ENCODE measurements at regions of chr15 and their contacts with region 1.

Region 1: GRCh38 chr15:58517682-58518525 is 86.1 kb downstream of the LIPC start:
- DNase-seq: no peak
- H3K4me3 Mint-ChIP-seq: peak overlapping the region; percentile 18
- H3K27ac Mint-ChIP-seq: peak overlapping the region; percentile 84
- H3K4me1 Mint-ChIP-seq: peaks cover 54% of the 10 kb centered on the region
- H3K27me3 Mint-ChIP-seq: no peaks in the 10 kb centered on the region

Region 2: DNA sequence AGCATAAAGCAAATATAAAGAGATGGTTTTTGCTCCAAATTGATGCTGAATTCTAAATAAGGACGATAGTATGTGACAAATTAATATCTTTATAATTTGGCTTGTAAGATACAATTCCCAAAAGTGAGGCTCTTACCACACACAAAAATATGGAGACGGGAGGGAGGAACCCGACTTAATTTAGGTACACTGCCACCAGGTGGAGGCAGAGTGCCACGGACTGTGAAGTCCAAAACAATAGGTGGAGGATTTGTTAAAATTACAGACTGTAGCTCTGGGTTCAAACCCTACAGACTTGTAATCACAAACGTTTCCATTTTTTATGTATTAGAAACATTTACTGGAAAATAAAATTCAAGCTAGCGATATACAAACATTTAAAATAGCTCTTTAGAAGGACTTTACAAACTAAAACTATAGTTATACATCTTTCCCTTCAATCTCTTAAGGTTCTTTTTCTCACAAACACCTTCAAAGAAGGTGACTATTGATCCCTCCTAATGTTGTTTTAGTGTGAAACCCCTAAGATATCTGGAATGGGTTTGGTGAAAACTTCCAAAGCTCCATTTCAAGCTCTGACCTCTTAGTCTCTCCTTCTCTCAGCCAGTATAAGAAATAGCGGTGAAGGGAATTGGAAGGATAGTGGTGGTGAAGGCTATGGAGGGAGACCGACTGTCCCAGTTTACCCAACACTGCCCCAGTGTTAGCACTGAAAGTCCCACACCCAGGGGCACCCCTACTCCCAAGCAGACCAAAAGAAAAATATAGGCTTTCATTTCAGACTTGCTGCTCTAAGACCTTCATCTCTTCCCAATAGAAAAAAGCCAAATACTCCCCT is 290.0 kb before region 1 on chr15:
- intact Hi-C with region 1: loop called (anchors 5 kb)
- DNase-seq: peak; percentile 47
- H3K4me3 Mint-ChIP-seq: no peak overlapping the region
- H3K27ac Mint-ChIP-seq: no peak overlapping the region
- H3K4me1 Mint-ChIP-seq: peaks cover 8% of the 10 kb centered on the region
- H3K27me3 Mint-ChIP-seq: peaks cover 19% of the 10 kb centered on the region

Region 3: DNA sequence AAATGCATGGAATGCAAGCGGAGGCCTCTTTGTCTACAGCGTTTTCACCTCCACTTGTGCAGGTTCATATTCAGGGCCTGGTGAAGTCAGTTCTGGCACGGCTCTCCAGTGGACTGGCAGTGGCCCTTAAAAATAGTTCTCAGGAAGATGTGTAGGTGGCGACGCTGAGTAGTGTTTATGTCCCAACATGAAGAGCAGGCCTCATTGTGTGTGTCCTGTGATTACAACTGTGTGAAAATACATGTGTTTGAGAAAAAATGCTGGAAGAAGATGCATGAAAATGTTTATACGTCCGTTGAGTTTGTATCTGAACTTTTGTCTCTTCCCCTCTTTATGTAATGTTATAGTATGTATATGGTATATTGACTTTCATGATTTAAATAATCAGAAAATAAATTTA is 78.9 kb before region 1 on chr15:
- intact Hi-C with region 1: loop called (anchors 1 kb)
- DNase-seq: peak; percentile 30
- H3K4me3 Mint-ChIP-seq: no peak overlapping the region
- H3K27ac Mint-ChIP-seq: no peak overlapping the region
- H3K4me1 Mint-ChIP-seq: peaks cover 33% of the 10 kb centered on the region
- H3K27me3 Mint-ChIP-seq: no peaks in the 10 kb centered on the region

Region 4: DNA sequence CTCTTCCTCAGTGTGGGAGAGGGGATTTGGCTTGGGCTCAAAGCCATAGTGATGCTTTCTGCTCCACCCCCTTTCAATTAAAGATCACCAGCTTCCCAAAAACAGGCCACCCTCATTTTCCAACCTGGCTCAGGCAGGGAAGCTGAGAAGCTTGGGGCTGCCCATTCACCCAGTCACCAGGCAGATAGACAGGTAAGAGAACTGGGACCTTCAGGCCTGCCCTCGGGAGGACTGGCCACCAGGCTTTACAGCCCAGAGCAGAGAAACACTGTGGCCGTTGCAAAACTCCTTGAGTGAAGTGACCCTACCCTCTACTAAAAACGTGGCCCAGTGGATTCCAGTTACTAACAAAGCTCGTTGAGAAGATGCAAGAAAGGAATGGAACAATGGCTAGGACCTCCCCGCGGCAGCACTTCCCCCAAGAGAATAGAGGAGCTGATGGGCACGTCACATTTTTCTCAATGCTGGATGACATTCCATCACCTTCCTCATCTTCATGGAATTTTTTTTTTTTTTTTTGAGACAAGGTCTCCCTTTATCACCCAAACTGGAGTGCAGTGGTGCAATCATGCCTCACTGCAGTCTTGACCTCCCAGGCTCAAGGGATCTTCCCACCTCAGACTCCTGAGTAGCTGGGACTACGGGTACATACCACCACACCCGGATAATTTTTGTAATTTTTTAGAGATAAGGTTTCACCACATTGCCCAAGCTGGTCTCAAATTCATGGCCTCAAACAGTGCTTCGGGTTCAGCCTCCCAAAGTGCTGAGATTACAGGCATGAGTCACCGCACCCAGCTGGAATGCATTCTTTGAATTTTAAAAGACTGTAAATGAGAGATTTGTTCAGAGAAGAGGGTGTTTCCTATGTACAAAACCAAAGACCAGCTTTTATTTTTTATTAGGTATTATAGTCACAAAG is 48.2 kb before region 1 on chr15:
- intact Hi-C with region 1: loop called (anchors 5 kb)
- DNase-seq: no peak
- H3K4me3 Mint-ChIP-seq: no peak overlapping the region
- H3K27ac Mint-ChIP-seq: no peak overlapping the region
- H3K4me1 Mint-ChIP-seq: peaks cover 48% of the 10 kb centered on the region
- H3K27me3 Mint-ChIP-seq: no peaks in the 10 kb centered on the region

Region 5: DNA sequence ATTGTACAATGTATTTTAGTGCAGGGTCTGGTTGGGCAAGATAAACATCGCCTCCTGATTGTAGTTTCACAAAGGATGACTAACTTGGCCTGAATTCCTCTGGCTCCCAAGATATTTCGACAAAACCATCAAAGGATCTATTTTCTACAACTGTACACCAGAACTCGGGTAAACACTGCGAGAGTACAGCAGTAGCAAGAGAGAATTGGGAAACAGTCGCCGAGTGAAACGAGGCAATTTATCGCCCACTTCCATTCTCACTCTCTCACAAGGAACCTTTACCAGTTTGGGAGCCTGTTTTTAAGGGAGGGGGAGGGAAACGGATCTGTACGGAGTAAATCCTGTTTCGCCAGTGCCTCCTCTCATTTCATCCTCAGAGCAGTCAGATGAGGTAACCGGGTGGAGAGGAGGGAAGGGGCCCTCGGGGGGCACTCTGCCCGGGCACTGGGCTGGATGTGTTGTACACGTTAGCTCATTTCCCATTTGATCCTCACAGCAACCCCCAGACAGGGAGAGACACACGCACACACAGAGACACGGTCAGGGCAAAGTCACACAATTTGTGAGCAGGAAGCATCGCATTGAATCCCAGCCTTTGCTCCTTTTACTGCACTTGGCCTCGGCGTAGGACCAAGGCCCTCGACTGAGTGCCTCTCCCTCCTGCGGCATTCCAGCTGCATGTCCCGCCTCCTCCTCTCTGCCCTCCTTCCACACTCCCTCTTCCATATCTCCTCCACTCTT is 34.0 kb after region 1 on chr15:
- intact Hi-C with region 1: loop called (anchors 1 kb)
- DNase-seq: no peak
- H3K4me3 Mint-ChIP-seq: no peak overlapping the region
- H3K27ac Mint-ChIP-seq: peak overlapping the region; percentile 91
- H3K4me1 Mint-ChIP-seq: peaks cover 39% of the 10 kb centered on the region
- H3K27me3 Mint-ChIP-seq: no peaks in the 10 kb centered on the region

Measured in activated T-helper 2 cell treated with anti-CD3 and anti-CD28 coated beads, Interferon-gamma antibody, Interleukin-2, Interleukin-4, amounts not matched to agents 10 μg/mL and 5 μg/mL and 100 μg/mL, durations not matched to agents 14 hours and 24 hours and 36 hours (primary cell).